Activated CD4-positive, alpha-beta T cell treated with anti-CD3 and anti-CD28 coated beads for 36 hours (primary cell): ENCODE measurements at regions of chr9 and their contacts with region 1.

Region 1: DNA sequence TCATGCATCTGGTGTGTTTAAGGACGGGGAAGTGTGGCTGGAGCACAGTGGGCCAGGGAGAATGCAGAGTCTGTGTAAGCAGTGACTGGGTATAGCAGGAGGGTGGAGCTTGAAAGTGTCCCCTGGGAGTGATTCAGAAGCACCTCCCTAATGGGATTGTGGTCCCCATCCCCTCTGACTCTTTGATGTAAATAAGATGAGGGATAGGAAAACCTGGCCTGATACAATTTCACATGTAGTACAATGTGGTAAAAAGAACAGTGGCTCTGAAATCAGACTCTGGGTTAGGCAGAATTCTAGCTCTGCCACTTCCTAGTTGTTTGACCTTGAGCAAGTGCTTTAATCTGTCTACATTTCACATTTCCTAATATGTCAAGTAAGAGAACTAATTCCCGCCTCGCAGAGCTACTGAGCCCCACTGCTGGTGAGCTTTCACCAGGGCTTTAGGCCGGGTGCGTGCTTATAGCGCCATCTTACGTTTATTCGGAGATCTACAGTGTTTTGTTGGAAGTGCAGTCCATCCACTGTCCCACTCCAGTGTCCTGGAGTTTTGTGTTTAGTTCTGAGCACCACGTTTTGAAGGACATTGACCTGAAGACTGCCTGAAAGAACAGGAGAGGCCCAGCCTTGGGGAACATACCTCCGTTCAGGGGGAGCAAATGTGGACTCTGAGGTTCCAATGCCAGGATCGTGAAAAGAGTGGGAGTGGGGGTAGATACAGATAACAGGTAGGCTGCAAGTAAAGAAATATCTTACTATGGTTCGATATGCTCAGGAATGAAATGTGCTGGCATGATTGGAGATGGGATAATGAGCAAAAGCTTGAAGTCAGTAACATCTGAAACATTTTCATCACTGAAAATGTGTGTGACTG is 51.2 kb upstream of the TESK1 start:
- DNase-seq: peak; percentile 69
- ATAC-seq: peak; percentile 86
- H3K4me3 Mint-ChIP-seq: no peak overlapping the region
- H3K27ac Mint-ChIP-seq: no peak overlapping the region
- H3K4me1 Mint-ChIP-seq: no peaks in the 10 kb centered on the region
- H3K27me3 Mint-ChIP-seq: no peaks in the 10 kb centered on the region

Region 2: GRCh38 chr9:34267660-34268059 is 1286.2 kb before region 1 on chr9:
- CTCF ChIA-PET with region 1: no interaction called
- POLR2A ChIA-PET with region 1: no interaction called
- intact Hi-C with region 1: no loop called
- DNase-seq: no peak
- ATAC-seq: peak; percentile 51
- H3K4me3 Mint-ChIP-seq: no peak overlapping the region
- H3K27ac Mint-ChIP-seq: no peak overlapping the region
- H3K4me1 Mint-ChIP-seq: peaks cover 5% of the 10 kb centered on the region
- H3K27me3 Mint-ChIP-seq: no peaks in the 10 kb centered on the region

Region 3: DNA sequence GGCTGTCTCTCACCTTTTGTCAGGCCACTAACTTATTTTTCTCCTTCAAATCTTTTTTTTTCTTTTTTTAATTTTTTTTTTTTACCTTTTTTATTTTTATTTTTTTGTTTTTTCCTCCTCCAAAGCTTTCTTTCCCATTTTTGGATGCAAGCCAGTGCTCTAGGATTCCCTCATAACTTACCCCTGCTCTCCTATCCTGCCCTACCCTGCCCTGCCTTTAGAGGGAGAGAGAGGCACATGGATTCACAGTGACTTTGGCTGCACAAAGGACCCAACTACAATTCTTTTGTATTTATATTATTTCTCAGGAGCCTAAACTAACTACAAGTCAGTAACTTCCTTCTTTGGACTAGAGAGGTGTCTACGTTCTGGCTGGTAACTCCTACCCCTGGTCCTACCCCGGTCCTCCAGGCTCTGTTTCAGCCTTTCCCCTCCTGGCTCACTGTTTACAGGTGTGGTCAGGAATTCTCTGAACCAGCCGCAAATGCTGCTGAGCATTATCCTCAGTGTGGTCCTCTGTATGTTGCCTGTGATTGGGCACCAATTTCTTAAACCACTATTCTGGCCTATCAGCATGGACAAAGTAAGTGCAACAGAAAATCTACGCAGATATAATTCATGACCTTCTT is 72.4 kb before region 1 on chr9:
- CTCF ChIA-PET with region 1: interaction called, 22 read pairs
- POLR2A ChIA-PET with region 1: no interaction called
- intact Hi-C with region 1: loop called (anchors 1 kb)
- DNase-seq: peak; percentile 46
- ATAC-seq: peak; percentile 78
- H3K4me3 Mint-ChIP-seq: no peak overlapping the region
- H3K27ac Mint-ChIP-seq: no peak overlapping the region
- H3K4me1 Mint-ChIP-seq: no peaks in the 10 kb centered on the region
- H3K27me3 Mint-ChIP-seq: peaks cover 3% of the 10 kb centered on the region

Region 4: DNA sequence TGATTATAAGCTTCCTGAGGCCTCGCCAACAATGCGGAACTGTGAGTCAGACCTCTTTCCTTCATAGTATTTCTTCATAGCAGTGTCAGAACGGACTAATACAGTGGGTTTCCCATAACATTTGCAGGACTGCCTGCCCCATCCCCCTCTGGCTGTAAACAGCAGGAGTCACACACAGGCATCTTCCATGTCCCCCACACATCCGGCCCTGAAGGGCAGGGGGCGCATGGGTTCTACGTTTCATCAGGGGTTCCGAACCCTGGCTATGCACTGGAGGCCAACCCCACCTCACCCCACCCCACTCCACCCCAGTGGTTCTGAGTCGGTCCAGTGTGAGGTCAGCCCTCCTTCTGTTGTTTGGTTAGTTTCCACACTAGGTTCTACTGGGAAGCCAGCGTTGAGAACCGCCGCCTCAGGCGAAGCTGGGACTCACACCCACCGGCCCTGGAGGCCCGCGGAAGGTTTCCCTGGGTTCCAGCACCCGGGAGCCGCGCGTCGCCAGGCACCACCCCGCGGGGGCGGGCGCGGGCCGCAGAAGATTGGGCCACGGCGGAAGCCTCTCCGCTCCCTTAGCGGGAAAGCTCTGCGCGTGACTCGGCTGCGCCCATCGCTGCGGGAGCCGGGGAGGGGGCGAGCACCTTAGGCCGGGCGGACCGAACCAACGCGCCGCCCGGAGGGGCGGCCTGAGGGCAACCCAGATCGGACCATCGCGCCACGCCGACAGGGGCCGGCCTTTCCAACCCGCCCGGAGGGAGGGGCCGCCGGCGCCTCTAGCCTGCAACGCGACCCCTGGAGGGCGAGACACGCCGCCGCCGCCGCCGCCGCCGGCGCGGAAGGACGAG is 64.4 kb before region 1 on chr9 and contains the start of gene RUSC2:
- CTCF ChIA-PET with region 1: interaction called, 11 read pairs
- POLR2A ChIA-PET with region 1: no interaction called
- intact Hi-C with region 1: loop called in 1 of 2 experiments (anchors 2 kb)
- DNase-seq: peak; percentile 82
- ATAC-seq: peak; percentile 72
- H3K4me3 Mint-ChIP-seq: peak within 1 kb of the TSS; percentile 76
- H3K27ac Mint-ChIP-seq: peak within 1 kb of the TSS; percentile 79
- H3K4me1 Mint-ChIP-seq: peaks cover 31% of the 10 kb centered on the region
- H3K27me3 Mint-ChIP-seq: peaks cover 9% of the 10 kb centered on the region
- total RNA-seq, gene RUSC2: 5.7 to 6.5 TPM

Region 5: DNA sequence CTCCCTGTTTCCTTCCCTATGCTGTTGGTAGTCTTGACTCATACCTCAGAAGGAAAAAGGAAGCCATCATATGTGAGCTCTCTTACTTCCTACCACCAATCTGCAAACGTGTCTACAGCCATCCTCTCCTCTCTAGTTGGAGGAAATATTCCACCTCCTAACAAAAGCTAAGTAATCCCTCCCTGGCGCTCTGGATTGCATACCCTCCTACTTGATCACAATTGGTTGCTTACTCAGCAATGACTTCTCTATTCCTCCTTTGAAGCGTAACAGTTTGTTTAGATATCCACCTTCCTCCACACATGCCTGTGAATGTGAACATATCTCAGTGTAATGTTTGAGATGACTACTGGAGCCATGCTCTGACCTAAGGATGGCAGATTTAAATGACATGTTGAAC is 45.8 kb before region 1 on chr9:
- CTCF ChIA-PET with region 1: interaction called, 12 read pairs
- POLR2A ChIA-PET with region 1: no interaction called
- intact Hi-C with region 1: loop called in 1 of 2 experiments (anchors 5 kb)
- DNase-seq: no peak
- ATAC-seq: no peak
- H3K4me3 Mint-ChIP-seq: no peak overlapping the region
- H3K27ac Mint-ChIP-seq: no peak overlapping the region
- H3K4me1 Mint-ChIP-seq: peaks cover 4% of the 10 kb centered on the region
- H3K27me3 Mint-ChIP-seq: peaks cover 5% of the 10 kb centered on the region

Region 6: GRCh38 chr9:35518226-35518821 is 35.6 kb before region 1 on chr9:
- CTCF ChIA-PET with region 1: interaction called, 12 read pairs
- POLR2A ChIA-PET with region 1: no interaction called
- intact Hi-C with region 1: no loop called
- DNase-seq: no peak
- ATAC-seq: no peak
- H3K4me3 Mint-ChIP-seq: no peak overlapping the region
- H3K27ac Mint-ChIP-seq: no peak overlapping the region
- H3K4me1 Mint-ChIP-seq: no peaks in the 10 kb centered on the region
- H3K27me3 Mint-ChIP-seq: no peaks in the 10 kb centered on the region

Region 7: DNA sequence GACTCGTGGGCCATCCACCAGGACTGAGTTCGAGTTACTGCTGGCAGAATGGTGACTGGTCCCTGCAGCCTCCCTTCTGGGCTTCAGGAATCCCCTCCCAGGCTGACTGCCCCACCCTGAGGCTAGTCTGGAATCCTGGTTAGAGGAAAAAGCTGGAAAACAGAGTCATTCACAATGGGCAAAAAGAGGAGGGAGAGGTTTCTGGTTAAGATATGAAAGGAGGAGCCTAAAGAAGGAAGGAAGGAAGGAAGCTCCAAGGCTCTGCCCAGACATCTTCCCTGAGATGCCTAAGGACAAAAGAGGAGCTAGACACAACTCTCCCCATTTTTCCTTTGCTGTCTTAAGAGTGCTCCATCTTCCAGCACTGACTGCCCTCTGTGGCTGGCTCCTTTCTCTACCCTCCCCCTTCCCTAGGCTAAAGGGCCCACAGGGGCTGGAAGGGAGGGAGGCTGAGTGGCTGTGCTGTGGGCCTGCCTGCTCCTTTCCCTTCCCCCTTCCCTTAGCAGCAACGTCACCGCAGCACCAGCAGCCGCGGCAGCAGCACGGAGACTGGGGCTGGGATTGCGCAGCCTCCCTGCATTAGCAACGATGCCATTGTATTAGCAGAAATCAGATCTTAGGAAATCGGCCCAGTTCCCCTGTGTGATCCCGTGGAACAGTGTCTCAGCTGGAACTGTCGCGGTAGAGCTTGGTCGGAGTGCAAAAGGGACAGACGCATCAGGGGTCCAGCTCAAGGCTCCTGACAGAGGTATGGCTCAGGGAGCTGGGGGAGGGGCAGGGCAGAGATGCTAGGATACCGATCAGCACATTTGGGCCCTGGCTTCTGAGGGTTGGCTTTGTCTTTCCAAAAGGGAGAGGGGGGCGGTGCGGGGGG is 15.3 kb before region 1 on chr9:
- CTCF ChIA-PET with region 1: interaction called, 10 read pairs
- POLR2A ChIA-PET with region 1: no interaction called
- intact Hi-C with region 1: no loop called
- DNase-seq: no peak
- ATAC-seq: no peak
- H3K4me3 Mint-ChIP-seq: no peak overlapping the region
- H3K27ac Mint-ChIP-seq: no peak overlapping the region
- H3K4me1 Mint-ChIP-seq: no peaks in the 10 kb centered on the region
- H3K27me3 Mint-ChIP-seq: peaks cover 4% of the 10 kb centered on the region

Region 8: GRCh38 chr9:35569206-35569605 is 15.3 kb after region 1 on chr9:
- CTCF ChIA-PET with region 1: interaction called, 11 read pairs
- POLR2A ChIA-PET with region 1: no interaction called
- intact Hi-C with region 1: no loop called
- DNase-seq: no peak
- ATAC-seq: no peak
- H3K4me3 Mint-ChIP-seq: peak overlapping the region; percentile 16
- H3K27ac Mint-ChIP-seq: peak overlapping the region; percentile 93
- H3K4me1 Mint-ChIP-seq: peaks cover 38% of the 10 kb centered on the region
- H3K27me3 Mint-ChIP-seq: no peaks in the 10 kb centered on the region